ENCODE measurements at regions of chr2 and their contacts with region 1.

Region 1: GRCh38 chr2:71609958-71610357 is 156.6 kb downstream of the DYSF start:
- DNase-seq: peak in 1 of 5 donors; percentile 7
- ATAC-seq: peak in 1 of 4 donors; percentile 15
- H3K4me3 ChIP-seq: no peak overlapping the region
- H3K27ac ChIP-seq: no peak overlapping the region
- H3K4me1 ChIP-seq: peaks cover 8 to 44% (median 19%) of the 10 kb centered on the region in 12 donors
- H3K27me3 ChIP-seq: no peaks in the 10 kb centered on the region
- CTCF ChIP-seq: peak in 10 of 12 donors; percentile 18 to 61 (median 40)
- POLR2A ChIP-seq: no peak

Region 2: DNA sequence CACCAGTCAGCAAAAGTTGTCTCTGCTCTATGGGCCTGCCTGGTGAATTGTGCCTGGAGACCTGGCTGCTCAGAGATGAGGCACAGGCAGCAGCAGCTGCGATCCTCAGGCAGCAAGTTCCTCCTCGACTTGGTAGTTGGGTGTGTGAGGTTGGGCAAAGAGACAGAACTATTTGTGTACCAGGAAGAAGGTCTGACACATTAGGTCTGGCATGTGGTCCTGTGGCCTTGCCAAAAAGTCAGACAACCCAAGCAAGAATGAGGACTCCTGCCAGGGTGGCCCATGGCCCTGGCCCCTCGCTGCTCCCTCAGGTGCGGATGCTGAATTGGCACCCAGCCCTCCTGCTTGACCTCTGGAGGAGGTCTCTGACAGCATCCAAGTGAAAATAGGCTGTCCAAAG is 36.1 kb after region 1 on chr2:
- intact Hi-C with region 1: loop called in 1 of 10 experiments (anchors 5 kb)
- DNase-seq: peak in 4 of 5 donors; percentile 67 to 80 (median 72)
- ATAC-seq: peak; percentile 96 to 97 (median 97)
- H3K4me3 ChIP-seq: no peak overlapping the region
- H3K27ac ChIP-seq: peak overlapping the region in 9 of 12 donors; percentile 12 to 86 (median 60)
- H3K4me1 ChIP-seq: peaks cover 0 to 11% (median 8%) of the 10 kb centered on the region in 12 donors
- H3K27me3 ChIP-seq: no peaks in the 10 kb centered on the region
- CTCF ChIP-seq: no peak
- POLR2A ChIP-seq: no peak

Region 3: GRCh38 chr2:71700658-71701397 is 90.9 kb after region 1 on chr2:
- intact Hi-C with region 1: loop called in 1 of 10 experiments (anchors 10 kb)
- DNase-seq: peak; percentile 80 to 93 (median 83)
- ATAC-seq: peak; percentile 88 to 92 (median 92)
- H3K4me3 ChIP-seq: no peak overlapping the region
- H3K27ac ChIP-seq: peak overlapping the region; percentile 31 to 98 (median 87)
- H3K4me1 ChIP-seq: peaks cover 0 to 70% (median 40%) of the 10 kb centered on the region in 12 donors
- H3K27me3 ChIP-seq: no peaks in the 10 kb centered on the region
- CTCF ChIP-seq: no peak
- POLR2A ChIP-seq: peak in 1 of 2 donors; percentile 26

Region 4: DNA sequence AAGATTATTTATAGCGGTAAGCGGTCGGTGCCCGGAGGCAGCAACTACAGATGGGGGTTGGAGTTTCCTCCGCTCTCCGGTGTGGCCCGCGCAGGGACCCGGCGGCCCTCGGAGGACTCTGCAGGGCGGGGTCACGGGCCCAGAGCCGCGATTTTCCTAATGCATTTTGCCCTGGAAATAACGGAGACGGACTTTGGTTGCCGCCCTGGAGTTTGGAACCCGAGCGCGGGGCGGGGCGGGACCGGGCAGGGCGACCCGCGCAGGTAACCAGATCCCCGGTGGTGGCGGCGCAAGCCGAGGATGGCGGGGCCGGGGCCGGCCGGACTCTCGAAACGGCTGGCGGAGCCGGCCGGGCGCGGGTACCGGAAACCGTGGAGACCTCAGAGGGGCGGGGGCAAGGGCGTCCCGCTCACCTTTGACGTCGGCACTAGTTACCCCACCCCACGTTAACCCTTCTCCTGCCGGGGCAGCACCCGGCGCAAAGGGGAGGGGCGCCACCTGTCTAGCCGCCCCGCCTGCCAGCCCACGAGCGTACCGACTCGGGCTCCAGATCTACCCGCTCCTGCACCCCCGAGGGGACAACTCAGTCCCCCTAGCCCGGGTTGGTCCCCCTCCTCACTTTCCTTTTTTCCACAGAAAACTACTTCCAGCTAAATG is 534.8 kb after region 1 on chr2:
- intact Hi-C with region 1: loop called in 5 of 10 experiments (anchors 5 to 10 kb)
- DNase-seq: peak; percentile 61 to 84 (median 67)
- ATAC-seq: peak in 3 of 4 donors; percentile 70 to 79 (median 79)
- H3K4me3 ChIP-seq: peak overlapping the region; percentile 35 to 67 (median 58)
- H3K27ac ChIP-seq: peak overlapping the region in 8 of 12 donors; percentile 15 to 82 (median 67)
- H3K4me1 ChIP-seq: peaks cover 7 to 74% (median 63%) of the 10 kb centered on the region in 12 donors
- H3K27me3 ChIP-seq: peaks cover 15 to 70% (median 41%) of the 10 kb centered on the region in 9 donors
- CTCF ChIP-seq: no peak
- POLR2A ChIP-seq: no peak

Measured in heart left ventricle (tissue), 16 donors.